Activated CD4-positive, alpha-beta T cell treated with anti-CD3 and anti-CD28 coated beads for 36 hours (primary cell): ENCODE measurements at regions of chr18 and their contacts with region 1.

Region 1: DNA sequence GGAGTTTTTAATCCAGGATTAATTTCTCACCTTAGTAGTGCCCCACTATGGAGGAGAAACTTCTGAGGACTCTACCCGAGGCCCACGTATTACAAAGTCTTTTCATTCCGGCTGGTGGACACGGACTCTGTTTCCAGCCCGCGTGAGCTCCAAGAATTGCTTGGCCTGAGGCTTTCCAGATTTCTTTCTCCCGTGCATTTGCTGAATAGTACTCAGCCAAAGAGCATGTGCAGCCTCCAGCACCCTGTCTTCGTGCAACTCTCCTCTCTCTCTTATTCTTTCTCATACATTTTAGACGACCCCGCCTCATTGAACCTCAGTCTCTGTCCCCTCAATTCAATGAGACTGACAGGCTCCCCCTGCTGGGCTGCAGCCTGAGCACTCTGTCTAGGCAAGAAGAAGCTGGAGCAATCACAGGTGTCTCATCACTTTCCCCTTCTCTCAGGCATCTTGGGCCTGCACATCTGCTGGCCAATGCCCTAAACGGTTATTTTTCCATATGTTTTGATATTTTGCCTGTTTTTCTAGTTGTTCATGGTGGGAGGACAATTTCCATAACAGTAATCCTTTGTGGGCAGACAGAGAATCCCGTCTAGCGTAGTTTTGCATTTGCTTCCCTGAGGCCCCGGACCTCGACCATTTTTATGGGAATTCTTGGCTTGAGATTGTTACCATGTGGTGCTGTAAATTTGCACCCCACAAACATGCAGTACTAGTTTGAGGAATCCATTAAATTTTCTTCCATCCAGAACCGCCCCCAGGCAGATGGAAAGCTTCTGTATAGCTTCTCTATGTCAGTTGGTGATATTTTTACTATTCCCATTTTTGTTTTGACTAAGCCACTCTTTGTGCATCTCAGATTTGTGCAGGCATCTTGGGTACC is 50.1 kb upstream of the LPIN2 start:
- DNase-seq: peak; percentile 88
- ATAC-seq: peak; percentile 34
- H3K4me3 Mint-ChIP-seq: peak overlapping the region; percentile 2
- H3K27ac Mint-ChIP-seq: peak overlapping the region; percentile 99
- H3K4me1 Mint-ChIP-seq: peaks cover 65% of the 10 kb centered on the region
- H3K27me3 Mint-ChIP-seq: no peaks in the 10 kb centered on the region

Region 2: GRCh38 chr18:2655178-2655953 is 407.7 kb before region 1 on chr18 and contains the start of gene SMCHD1:
- CTCF ChIA-PET with region 1: no interaction called
- POLR2A ChIA-PET with region 1: interaction called, 5 read pairs
- intact Hi-C with region 1: loop called in 1 of 2 experiments (anchors 1 kb)
- DNase-seq: peak; percentile 97
- ATAC-seq: peak; percentile 78
- H3K4me3 Mint-ChIP-seq: peak within 1 kb of the TSS; percentile 95
- H3K27ac Mint-ChIP-seq: peak within 1 kb of the TSS; percentile 96
- H3K4me1 Mint-ChIP-seq: peaks cover 31% of the 10 kb centered on the region
- H3K27me3 Mint-ChIP-seq: no peaks in the 10 kb centered on the region
- total RNA-seq, gene SMCHD1: 89.5 to 121 TPM

Region 3: GRCh38 chr18:2958819-2959298 is 104.2 kb before region 1 on chr18:
- CTCF ChIA-PET with region 1: interaction called, 18 read pairs
- POLR2A ChIA-PET with region 1: interaction called, 4 read pairs
- intact Hi-C with region 1: loop called (anchors 1 kb)
- DNase-seq: peak; percentile 63
- ATAC-seq: no peak
- H3K4me3 Mint-ChIP-seq: peak overlapping the region; percentile 71
- H3K27ac Mint-ChIP-seq: peak overlapping the region; percentile 100
- H3K4me1 Mint-ChIP-seq: peaks cover 90% of the 10 kb centered on the region
- H3K27me3 Mint-ChIP-seq: no peaks in the 10 kb centered on the region

Region 4: GRCh38 chr18:2994603-2995432 is 68.2 kb before region 1 on chr18:
- CTCF ChIA-PET with region 1: interaction called, 67 read pairs
- POLR2A ChIA-PET with region 1: interaction called, 14 read pairs
- intact Hi-C with region 1: loop called (anchors 1 kb)
- DNase-seq: peak; percentile 85
- ATAC-seq: peak; percentile 38
- H3K4me3 Mint-ChIP-seq: no peak overlapping the region
- H3K27ac Mint-ChIP-seq: peak overlapping the region; percentile 80
- H3K4me1 Mint-ChIP-seq: peaks cover 90% of the 10 kb centered on the region
- H3K27me3 Mint-ChIP-seq: no peaks in the 10 kb centered on the region

Region 5: GRCh38 chr18:3037423-3037915 is 25.6 kb before region 1 on chr18:
- CTCF ChIA-PET with region 1: interaction called, 10 read pairs
- POLR2A ChIA-PET with region 1: interaction called, 12 read pairs
- intact Hi-C with region 1: loop called in 1 of 2 experiments (anchors 1 kb)
- DNase-seq: peak; percentile 40
- ATAC-seq: peak; percentile 84
- H3K4me3 Mint-ChIP-seq: no peak overlapping the region
- H3K27ac Mint-ChIP-seq: no peak overlapping the region
- H3K4me1 Mint-ChIP-seq: peaks cover 21% of the 10 kb centered on the region
- H3K27me3 Mint-ChIP-seq: no peaks in the 10 kb centered on the region

Region 6: DNA sequence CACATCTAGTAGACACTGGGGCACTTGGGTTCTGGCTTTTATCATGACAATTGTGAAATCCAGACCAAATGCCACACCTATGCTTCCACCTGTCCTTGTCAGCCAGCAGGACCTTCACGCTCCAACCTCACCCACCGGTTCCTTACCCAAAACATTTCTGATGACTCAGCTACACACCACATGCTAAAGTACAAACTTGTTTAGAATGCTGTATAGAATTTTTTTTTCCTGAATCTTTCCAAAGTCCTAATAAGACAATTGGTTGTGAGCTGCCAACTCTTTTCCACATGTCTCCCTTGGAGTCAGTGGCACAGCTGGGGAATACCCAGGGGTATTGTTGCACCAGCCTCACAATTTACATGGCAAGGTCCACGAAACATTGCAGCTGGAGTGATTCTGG is 25.4 kb after region 1 on chr18:
- CTCF ChIA-PET with region 1: interaction called, 29 read pairs
- POLR2A ChIA-PET with region 1: interaction called, 3 read pairs
- intact Hi-C with region 1: no loop called
- DNase-seq: no peak
- ATAC-seq: peak; percentile 33
- H3K4me3 Mint-ChIP-seq: no peak overlapping the region
- H3K27ac Mint-ChIP-seq: no peak overlapping the region
- H3K4me1 Mint-ChIP-seq: peaks cover 10% of the 10 kb centered on the region
- H3K27me3 Mint-ChIP-seq: no peaks in the 10 kb centered on the region

Region 7: DNA sequence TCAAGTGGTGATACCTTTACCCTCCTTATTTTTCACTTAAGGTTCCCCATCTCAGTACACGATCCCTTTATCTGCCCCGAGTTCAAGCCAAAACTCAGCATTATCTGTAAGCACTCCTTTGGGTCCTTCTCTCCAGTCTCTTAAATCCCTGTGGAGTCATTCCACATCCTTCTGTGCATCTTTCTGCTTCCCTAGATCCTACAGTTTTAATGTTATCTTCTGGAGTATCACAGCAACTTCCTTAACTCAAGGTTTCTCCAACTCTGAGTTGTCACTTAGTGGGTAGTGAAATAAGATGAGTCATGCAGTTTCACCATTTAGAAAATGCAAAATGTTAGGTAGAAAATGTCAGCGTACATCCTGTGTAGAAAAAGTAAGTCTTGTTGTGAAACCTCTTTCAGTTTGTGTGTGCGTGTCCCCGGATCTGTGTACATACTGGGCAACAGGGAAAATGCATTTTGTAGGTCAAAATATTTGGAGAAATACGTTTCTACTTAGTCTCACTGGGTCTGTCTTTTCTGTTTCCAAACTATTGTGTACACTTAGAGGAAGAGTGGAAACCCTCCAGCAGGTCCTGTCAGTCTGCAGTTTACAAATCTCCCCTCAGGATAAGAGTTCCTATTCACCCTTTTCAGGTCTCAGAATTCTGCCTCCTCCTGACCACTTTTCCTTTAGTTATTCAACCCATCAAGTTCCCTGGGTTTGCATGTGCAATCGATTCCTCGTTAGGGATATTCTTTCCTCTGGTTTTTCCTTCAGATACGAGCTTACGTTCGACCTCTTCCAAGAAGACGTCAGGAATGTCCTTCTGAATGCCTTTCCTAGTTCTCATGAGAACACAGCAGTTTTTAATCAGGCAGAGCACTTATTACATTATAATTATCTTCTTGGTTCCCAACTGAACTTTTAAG is 541.7 kb after region 1 on chr18:
- CTCF ChIA-PET with region 1: no interaction called
- POLR2A ChIA-PET with region 1: no interaction called
- intact Hi-C with region 1: loop called in 1 of 2 experiments (anchors 5 kb)
- DNase-seq: peak; percentile 59
- ATAC-seq: peak; percentile 69
- H3K4me3 Mint-ChIP-seq: no peak overlapping the region
- H3K27ac Mint-ChIP-seq: no peak overlapping the region
- H3K4me1 Mint-ChIP-seq: peaks cover 11% of the 10 kb centered on the region
- H3K27me3 Mint-ChIP-seq: no peaks in the 10 kb centered on the region